Activated naive CD4-positive, alpha-beta T cell treated with anti-CD3 and anti-CD28 coated beads for 36 hours (primary cell): ENCODE measurements at regions of chr9 and their contacts with region 1.

Region 1: DNA sequence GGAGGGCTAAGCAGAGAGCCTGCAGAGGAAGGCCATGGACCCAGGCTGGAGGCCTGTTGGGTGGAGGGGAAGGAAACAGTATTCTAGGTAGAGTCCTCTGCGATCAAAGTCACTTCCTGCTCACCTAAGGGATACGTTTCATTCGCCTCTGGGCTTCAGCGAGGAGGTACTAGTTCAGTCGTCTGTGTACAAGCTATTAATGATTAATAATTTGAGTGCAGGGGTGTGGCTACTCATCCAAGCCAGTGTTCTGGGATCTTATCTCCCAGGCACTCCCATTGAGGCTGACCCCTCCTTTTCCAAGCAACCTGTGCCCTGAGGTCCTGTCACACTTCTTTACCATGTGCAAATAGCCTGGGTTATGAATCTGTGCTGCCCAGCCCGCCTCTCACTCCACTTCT is 25.2 kb downstream of the RALGPS1 start:
- DNase-seq: no peak
- H3K4me3 Mint-ChIP-seq: no peak overlapping the region
- H3K27ac Mint-ChIP-seq: no peak overlapping the region
- H3K4me1 Mint-ChIP-seq: peaks cover 4% of the 10 kb centered on the region
- H3K27me3 Mint-ChIP-seq: peaks cover 22% of the 10 kb centered on the region

Region 2: DNA sequence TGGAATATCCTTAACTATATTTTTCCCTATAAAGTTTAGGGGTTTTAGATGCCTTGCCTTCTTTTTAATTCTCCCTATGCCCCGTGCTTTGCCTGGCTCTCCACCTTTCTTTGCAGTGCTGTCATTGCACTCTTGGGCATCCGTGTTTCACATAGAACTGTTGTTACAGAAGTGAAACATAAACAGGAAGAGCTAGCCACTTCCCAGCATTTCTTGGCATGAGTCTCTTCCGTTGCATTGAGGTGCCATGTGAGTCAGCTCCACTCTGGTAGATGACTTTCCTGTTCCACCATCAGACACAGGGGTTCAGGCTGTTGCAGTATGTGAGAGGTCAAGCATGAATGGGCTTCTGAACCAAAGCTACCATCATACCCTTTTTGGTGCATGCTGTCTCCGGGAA is 109.2 kb after region 1 on chr9:
- CTCF ChIA-PET with region 1: no interaction called
- intact Hi-C with region 1: loop called (anchors 2 kb)
- DNase-seq: peak; percentile 64
- H3K4me3 Mint-ChIP-seq: no peak overlapping the region
- H3K27ac Mint-ChIP-seq: no peak overlapping the region
- H3K4me1 Mint-ChIP-seq: peaks cover 16% of the 10 kb centered on the region
- H3K27me3 Mint-ChIP-seq: no peaks in the 10 kb centered on the region